Activated B cell treated with CpG ODN at 0.5 μM for 24 hours (primary cell): ENCODE measurements at regions of chr7 and their contacts with region 1.

Region 1: GRCh38 chr7:1225441-1226185 is 7.1 kb upstream of the UNCX start:
- DNase-seq: no peak
- ATAC-seq: no peak
- H3K4me3 Mint-ChIP-seq: no peak overlapping the region
- H3K27ac Mint-ChIP-seq: peak overlapping the region; percentile 9
- H3K4me1 Mint-ChIP-seq: no peaks in the 10 kb centered on the region
- H3K27me3 Mint-ChIP-seq: peaks cover 51% of the 10 kb centered on the region
- CTCF ChIP-seq: no peak

Region 2: GRCh38 chr7:1242606-1243289 is 17.1 kb after region 1 on chr7:
- CTCF ChIA-PET with region 1: interaction called, 3 read pairs
- POLR2A ChIA-PET with region 1: no interaction called
- intact Hi-C with region 1: loop called (anchors 2 kb)
- DNase-seq: no peak
- ATAC-seq: no peak
- H3K4me3 Mint-ChIP-seq: no peak overlapping the region
- H3K27ac Mint-ChIP-seq: no peak overlapping the region
- H3K4me1 Mint-ChIP-seq: peaks cover 2% of the 10 kb centered on the region
- H3K27me3 Mint-ChIP-seq: peaks cover 51% of the 10 kb centered on the region
- CTCF ChIP-seq: no peak